ENCODE measurements at regions of chr20 and their contacts with region 1.

Region 1: DNA sequence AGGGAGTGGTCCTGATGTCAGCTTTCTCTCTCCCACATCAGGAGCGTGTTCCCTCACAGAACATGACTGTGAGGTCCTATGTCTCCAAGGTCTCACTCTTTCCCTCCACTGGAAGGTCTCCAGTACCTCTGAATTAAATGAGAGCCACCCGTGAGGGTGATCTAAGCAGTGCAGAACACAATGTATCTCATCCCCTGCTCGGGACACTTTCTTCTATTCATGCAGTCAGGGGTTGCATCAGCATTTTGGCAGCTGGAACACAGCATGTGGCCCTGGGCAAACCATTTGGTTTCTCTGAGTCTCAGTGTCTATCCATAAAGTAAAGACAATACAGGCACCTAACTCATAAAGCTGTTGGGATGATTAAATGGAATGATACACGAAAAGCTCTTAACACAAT is 34.2 kb downstream of the MAFB start:
- DNase-seq: peak; percentile 81
- H3K4me3 Mint-ChIP-seq: no peak overlapping the region
- H3K27ac Mint-ChIP-seq: peak overlapping the region; percentile 88
- H3K4me1 Mint-ChIP-seq: peaks cover 43% of the 10 kb centered on the region
- H3K27me3 Mint-ChIP-seq: no peaks in the 10 kb centered on the region
- CTCF ChIP-seq: no peak

Region 2: GRCh38 chr20:40286975-40287531 is 367.8 kb before region 1 on chr20:
- CTCF ChIA-PET with region 1: interaction called, 6 read pairs
- POLR2A ChIA-PET with region 1: interaction called, 15 read pairs
- intact Hi-C with region 1: no loop called
- DNase-seq: peak; percentile 98
- H3K4me3 Mint-ChIP-seq: peak overlapping the region; percentile 40
- H3K27ac Mint-ChIP-seq: peak overlapping the region; percentile 92
- H3K4me1 Mint-ChIP-seq: peaks cover 36% of the 10 kb centered on the region
- H3K27me3 Mint-ChIP-seq: no peaks in the 10 kb centered on the region
- CTCF ChIP-seq: no peak

Region 3: DNA sequence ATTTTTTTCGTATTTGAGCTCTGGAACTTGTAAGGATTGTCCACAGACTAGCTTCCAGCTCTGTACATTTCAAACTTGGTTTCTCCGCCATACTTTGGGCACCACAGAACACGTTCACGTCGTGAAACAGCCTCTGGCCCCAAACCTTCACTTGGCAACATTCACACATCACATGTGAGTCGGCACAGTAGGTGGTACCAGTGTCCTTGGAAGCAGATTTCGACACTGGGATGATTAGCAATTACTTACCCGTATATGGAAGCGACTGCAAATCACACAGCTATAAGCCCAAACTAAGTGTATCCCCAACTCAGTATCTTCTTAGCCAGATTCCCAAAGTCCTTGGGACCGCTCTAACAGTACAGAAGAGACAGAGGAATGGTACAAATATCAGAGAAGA is 26.0 kb before region 1 on chr20:
- CTCF ChIA-PET with region 1: interaction called, 10 read pairs
- POLR2A ChIA-PET with region 1: interaction called, 57 read pairs
- intact Hi-C with region 1: no loop called
- DNase-seq: peak; percentile 84
- H3K4me3 Mint-ChIP-seq: no peak overlapping the region
- H3K27ac Mint-ChIP-seq: peak overlapping the region; percentile 80
- H3K4me1 Mint-ChIP-seq: peaks cover 54% of the 10 kb centered on the region
- H3K27me3 Mint-ChIP-seq: no peaks in the 10 kb centered on the region
- CTCF ChIP-seq: no peak

Region 4: DNA sequence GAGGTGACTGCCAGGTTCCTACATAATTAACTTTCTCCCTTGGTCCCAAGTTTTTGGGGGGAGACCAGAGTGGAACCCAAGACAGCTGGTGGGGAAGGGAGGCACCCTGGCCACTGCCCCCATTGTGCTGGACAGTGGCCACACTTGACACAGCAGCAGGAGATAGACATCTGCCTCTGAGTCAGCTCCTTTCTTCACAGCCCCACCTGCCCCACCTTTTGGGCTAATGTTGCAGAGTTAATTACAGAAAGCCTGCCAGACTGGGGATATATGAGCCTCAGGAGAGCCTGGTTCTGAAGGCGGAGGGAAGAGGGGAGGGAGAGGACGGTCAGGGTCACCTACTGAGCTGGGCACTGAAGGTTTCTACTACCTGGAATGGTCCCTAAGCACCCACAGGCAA is 16.5 kb before region 1 on chr20:
- CTCF ChIA-PET with region 1: interaction called, 6 read pairs
- POLR2A ChIA-PET with region 1: interaction called, 57 read pairs
- intact Hi-C with region 1: no loop called
- DNase-seq: peak; percentile 39
- H3K4me3 Mint-ChIP-seq: no peak overlapping the region
- H3K27ac Mint-ChIP-seq: peak overlapping the region; percentile 24
- H3K4me1 Mint-ChIP-seq: peaks cover 23% of the 10 kb centered on the region
- H3K27me3 Mint-ChIP-seq: no peaks in the 10 kb centered on the region
- CTCF ChIP-seq: no peak

Region 5: GRCh38 chr20:40668449-40669228 is 13.8 kb after region 1 on chr20:
- CTCF ChIA-PET with region 1: interaction called, 10 read pairs
- POLR2A ChIA-PET with region 1: interaction called, 14 read pairs
- intact Hi-C with region 1: no loop called
- DNase-seq: peak; percentile 64
- H3K4me3 Mint-ChIP-seq: no peak overlapping the region
- H3K27ac Mint-ChIP-seq: no peak overlapping the region
- H3K4me1 Mint-ChIP-seq: peaks cover 5% of the 10 kb centered on the region
- H3K27me3 Mint-ChIP-seq: no peaks in the 10 kb centered on the region
- CTCF ChIP-seq: no peak

Region 6: DNA sequence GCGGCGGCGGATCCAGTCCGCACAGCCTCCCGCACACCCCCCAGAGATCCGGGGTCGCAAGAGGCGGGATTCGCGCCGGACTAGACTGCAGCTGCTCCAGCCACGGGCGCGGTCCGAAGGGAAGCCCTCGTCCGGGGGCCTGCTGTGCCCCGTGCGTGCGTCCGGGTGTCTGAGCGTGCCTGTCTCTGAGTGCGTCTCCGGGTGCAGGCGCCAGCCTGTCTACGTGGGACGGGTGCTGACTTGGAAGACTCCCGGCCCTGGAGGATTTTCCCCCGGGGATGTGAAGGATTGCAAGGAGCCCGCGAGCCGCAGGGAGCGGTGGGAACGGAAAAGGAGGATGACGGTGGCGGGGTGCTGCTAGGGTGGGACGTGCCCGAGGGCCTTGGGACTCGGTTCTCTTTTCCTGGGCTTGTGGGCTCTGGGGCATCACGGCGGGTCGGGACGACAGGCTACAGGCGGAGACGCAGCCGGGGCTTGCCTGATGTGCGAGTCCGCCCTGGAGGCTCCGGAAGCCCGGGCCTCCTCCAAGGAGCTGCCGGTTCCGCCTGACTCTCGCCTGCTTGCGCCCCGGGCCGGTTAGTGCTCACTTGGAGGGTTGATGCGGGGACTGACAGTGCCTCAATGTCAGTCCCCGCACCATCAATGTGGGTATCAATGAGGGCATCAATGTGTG is 28.5 kb after region 1 on chr20:
- CTCF ChIA-PET with region 1: interaction called, 48 read pairs
- POLR2A ChIA-PET with region 1: interaction called, 105 read pairs
- intact Hi-C with region 1: no loop called
- DNase-seq: no peak
- H3K4me3 Mint-ChIP-seq: no peak overlapping the region
- H3K27ac Mint-ChIP-seq: no peak overlapping the region
- H3K4me1 Mint-ChIP-seq: peaks cover 17% of the 10 kb centered on the region
- H3K27me3 Mint-ChIP-seq: no peaks in the 10 kb centered on the region
- CTCF ChIP-seq: no peak

Measured in MCF 10A (cell line).